ENCODE measurements at regions of chr10 and their contacts with region 1.

Region 1: GRCh38 chr10:93376372-93377293 is 105.5 kb downstream of the MYOF start:
- DNase-seq: peak; percentile 71 to 87 (median 82)
- H3K4me3 ChIP-seq: no peak overlapping the region
- H3K4me3 Mint-ChIP-seq: no peak overlapping the region
- H3K27ac ChIP-seq: peak overlapping the region in 1 of 2 donors; percentile 14
- H3K27ac Mint-ChIP-seq: peak overlapping the region in 5 of 7 donors; percentile 10 to 81 (median 71)
- H3K4me1 ChIP-seq: peaks cover 19 to 23% of the 10 kb centered on the region in 2 donors
- H3K4me1 Mint-ChIP-seq: peaks cover 21% of the 10 kb centered on the region
- H3K27me3 ChIP-seq: no peaks in the 10 kb centered on the region
- H3K27me3 Mint-ChIP-seq: no peaks in the 10 kb centered on the region
- CTCF ChIP-seq: peak; percentile 92

Region 2: DNA sequence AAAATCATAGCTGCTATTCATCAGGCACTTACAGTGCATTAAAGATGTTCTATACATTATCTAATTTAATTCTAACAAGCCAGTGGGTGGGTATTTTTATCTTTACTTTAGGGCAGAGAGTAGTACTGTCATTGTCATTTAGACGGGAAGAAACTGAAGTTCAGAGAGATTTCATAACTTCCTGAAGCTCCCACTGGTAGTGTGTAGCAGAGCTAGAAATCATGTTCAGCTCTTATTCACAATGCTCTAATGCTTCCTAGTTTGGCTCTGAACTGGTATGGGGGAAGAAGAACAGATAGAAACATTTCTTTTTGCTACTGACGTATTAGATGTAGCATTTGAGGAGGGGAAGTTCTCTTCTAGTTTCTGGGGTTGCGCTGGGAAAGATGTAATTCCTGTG is 186.3 kb before region 1 on chr10:
- intact Hi-C with region 1: no loop called
- DNase-seq: peak; percentile 40 to 60 (median 46)
- H3K4me3 ChIP-seq: peak overlapping the region in 1 of 3 experiments; percentile 33
- H3K4me3 Mint-ChIP-seq: peak overlapping the region in 1 of 2 donors; percentile 36
- H3K27ac ChIP-seq: peak overlapping the region; percentile 36 to 73
- H3K27ac Mint-ChIP-seq: peak overlapping the region; percentile 3 to 92 (median 58)
- H3K4me1 ChIP-seq: peaks cover 21% of the 10 kb centered on the region in 2 donors
- H3K4me1 Mint-ChIP-seq: peaks cover 16% of the 10 kb centered on the region
- H3K27me3 ChIP-seq: no peaks in the 10 kb centered on the region
- H3K27me3 Mint-ChIP-seq: peaks cover 0 to 2% (median under 1%) of the 10 kb centered on the region in 3 donors
- CTCF ChIP-seq: no peak

Region 3: DNA sequence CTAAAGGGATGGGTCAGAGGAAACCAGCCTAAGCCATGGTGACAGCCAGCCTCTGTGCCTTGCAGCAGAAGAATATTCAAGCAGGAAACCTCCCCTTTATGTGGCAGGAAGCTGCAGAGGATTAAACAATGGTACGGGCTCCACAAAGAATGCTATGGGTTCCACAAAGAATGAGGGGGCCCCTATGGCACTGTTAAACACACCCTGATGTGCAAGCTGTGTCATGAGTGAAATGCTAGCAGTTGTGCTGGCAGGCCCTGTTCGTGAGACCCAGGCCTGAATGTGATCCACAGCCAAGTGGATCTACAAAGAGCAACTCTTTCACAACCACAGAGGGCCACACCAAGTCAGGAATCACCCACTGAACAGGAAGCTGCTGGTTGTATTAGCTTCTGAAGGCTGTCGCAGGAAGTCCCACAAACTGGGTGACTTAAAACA is 36.6 kb after region 1 on chr10:
- intact Hi-C with region 1: loop called in 1 of 2 experiments (anchors 5 kb)
- DNase-seq: peak; percentile 74 to 91 (median 88)
- H3K4me3 ChIP-seq: peak overlapping the region in 1 of 3 experiments; percentile 47
- H3K4me3 Mint-ChIP-seq: peak overlapping the region in 1 of 2 donors; percentile 40
- H3K27ac ChIP-seq: peak overlapping the region; percentile 64 to 96
- H3K27ac Mint-ChIP-seq: peak overlapping the region; percentile 76 to 91 (median 88)
- H3K4me1 ChIP-seq: peaks cover 28 to 35% of the 10 kb centered on the region in 2 donors
- H3K4me1 Mint-ChIP-seq: peaks cover 37% of the 10 kb centered on the region
- H3K27me3 ChIP-seq: no peaks in the 10 kb centered on the region
- H3K27me3 Mint-ChIP-seq: peaks cover 2 to 4% (median 3%) of the 10 kb centered on the region in 3 donors
- CTCF ChIP-seq: no peak

Region 4: DNA sequence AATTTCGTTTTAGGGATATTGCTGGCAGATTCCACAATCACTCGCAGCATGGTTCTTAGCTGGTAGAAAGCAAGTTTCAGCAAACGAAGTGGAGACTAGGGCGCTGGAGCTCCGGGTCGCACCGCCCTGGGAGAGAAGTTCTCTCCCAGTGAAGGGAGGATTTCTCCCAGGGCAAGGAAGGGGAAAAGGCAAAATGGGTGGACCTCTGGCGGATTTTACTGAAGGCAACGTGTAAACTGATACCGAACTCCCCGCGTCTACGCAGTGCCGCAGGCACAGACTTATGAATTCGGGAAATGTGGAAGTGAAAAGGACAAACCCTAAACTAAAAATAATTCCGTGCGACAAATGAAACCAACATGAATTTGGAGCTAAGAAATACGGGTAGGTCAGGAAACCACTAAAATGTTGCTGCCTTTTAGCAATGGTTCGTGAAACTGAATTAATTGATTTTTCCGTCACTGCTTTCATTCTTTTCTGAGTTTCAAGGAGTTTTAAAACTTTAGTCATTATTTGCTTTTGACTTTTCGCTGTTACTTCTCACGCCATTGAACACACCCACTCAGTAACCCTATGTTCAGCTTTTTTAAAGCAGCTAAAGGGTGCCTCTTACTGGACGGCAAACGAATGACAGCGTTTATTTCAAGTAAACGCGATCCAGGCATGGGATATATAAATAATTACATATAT is 105.7 kb after region 1 on chr10 and contains the start of gene MYOF:
- intact Hi-C with region 1: loop called (anchors 2 kb)
- DNase-seq: peak; percentile 77 to 82 (median 81)
- H3K4me3 ChIP-seq: peak within 1 kb of the TSS; percentile 58 to 98 (median 84)
- H3K4me3 Mint-ChIP-seq: peak within 1 kb of the TSS; percentile 92 to 99
- H3K27ac ChIP-seq: peak within 1 kb of the TSS; percentile 77 to 99
- H3K27ac Mint-ChIP-seq: peak within 1 kb of the TSS; percentile 92 to 99 (median 96)
- H3K4me1 ChIP-seq: peaks cover 20 to 37% of the 10 kb centered on the region in 2 donors
- H3K4me1 Mint-ChIP-seq: peaks cover 41% of the 10 kb centered on the region
- H3K27me3 ChIP-seq: no peaks in the 10 kb centered on the region
- H3K27me3 Mint-ChIP-seq: peaks cover 0 to 2% (median 2%) of the 10 kb centered on the region in 3 donors
- CTCF ChIP-seq: peak; percentile 80
- polyA plus RNA-seq, gene MYOF: 9.7 to 29.1 (median 14.5) TPM

Region 5: DNA sequence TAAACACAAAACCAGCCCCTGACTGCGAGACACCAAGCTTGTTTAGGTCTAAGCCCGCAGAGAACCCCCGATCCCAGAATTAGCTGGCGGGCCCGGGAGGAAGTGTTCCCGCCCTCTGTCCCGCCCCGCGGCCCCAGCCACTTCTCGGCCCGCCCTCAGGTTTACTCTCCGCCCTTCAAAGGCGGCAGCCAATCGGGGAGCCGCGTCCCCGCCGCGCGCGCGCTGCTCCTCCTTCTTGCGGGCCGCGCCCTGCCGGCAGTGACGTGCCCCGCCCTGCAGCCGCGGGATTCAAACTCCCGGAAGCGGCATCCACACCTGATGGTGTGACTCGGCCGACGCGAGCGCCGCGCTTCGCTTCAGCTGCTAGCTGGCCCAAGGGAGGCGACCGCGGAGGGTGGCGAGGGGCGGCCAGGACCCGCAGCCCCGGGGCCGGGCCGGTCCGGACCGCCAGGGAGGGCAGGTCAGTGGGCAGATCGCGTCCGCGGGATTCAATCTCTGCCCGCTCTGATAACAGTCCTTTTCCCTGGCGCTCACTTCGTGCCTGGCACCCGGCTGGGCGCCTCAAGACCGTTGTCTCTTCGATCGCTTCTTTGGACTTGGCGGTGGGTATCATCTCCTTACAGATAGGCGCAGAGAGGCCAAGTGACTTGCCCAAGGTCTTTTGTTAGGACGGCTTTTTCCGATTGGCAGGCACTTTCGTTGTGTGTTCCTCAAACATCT is 119.8 kb after region 1 on chr10 and contains the start of gene CEP55:
- intact Hi-C with region 1: loop called in 1 of 2 experiments (anchors 5 kb)
- DNase-seq: peak; percentile 90 to 92 (median 92)
- H3K4me3 ChIP-seq: peak within 1 kb of the TSS; percentile 91 to 95 (median 94)
- H3K4me3 Mint-ChIP-seq: peak within 1 kb of the TSS; percentile 96 to 98
- H3K27ac ChIP-seq: peak within 1 kb of the TSS in 1 of 2 donors; percentile 71
- H3K27ac Mint-ChIP-seq: peak within 1 kb of the TSS; percentile 63 to 94 (median 85)
- H3K4me1 ChIP-seq: peaks cover 22 to 28% of the 10 kb centered on the region in 2 donors
- H3K4me1 Mint-ChIP-seq: peaks cover 32% of the 10 kb centered on the region
- H3K27me3 ChIP-seq: no peaks in the 10 kb centered on the region
- H3K27me3 Mint-ChIP-seq: peaks cover 0 to 5% (median 1%) of the 10 kb centered on the region in 3 donors
- CTCF ChIP-seq: no peak
- polyA plus RNA-seq, gene CEP55: 0.05 to 0.26 TPM in 2 of 3 donors, not detected in the other

Region 6: DNA sequence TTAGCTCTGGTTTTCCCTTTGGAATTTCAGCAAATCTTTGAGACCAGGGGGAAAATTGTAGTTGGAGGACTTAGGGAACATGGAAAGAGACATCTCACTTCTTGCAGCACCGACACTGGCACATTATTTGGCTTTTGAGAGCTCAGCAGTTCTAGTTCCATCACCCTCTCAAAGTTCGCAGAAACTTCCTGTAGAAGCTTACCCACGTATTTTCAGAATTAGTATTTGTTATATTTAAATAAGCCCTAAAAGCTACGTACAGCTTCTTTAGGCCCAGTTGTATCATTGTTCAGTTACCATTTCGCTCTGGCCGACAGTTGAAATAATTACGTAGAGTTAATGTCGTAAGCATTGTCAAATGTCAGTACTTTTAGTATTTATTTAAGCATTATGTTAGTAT is 133.2 kb after region 1 on chr10:
- intact Hi-C with region 1: loop called in 1 of 2 experiments (anchors 2 kb)
- DNase-seq: no peak
- H3K4me3 ChIP-seq: no peak overlapping the region
- H3K4me3 Mint-ChIP-seq: no peak overlapping the region
- H3K27ac ChIP-seq: no peak overlapping the region
- H3K27ac Mint-ChIP-seq: peak overlapping the region in 1 of 7 donors; percentile 77
- H3K4me1 ChIP-seq: peaks cover 13 to 19% of the 10 kb centered on the region in 2 donors
- H3K4me1 Mint-ChIP-seq: peaks cover 10% of the 10 kb centered on the region
- H3K27me3 ChIP-seq: no peaks in the 10 kb centered on the region
- H3K27me3 Mint-ChIP-seq: peaks cover 0 to 2% (median 0%) of the 10 kb centered on the region in 3 donors
- CTCF ChIP-seq: no peak

Region 7: GRCh38 chr10:93672022-93672678 is 295.5 kb after region 1 on chr10:
- intact Hi-C with region 1: loop called in 1 of 2 experiments (anchors 10 kb)
- DNase-seq: no peak
- H3K4me3 ChIP-seq: no peak overlapping the region
- H3K4me3 Mint-ChIP-seq: no peak overlapping the region
- H3K27ac ChIP-seq: no peak overlapping the region
- H3K27ac Mint-ChIP-seq: no peak overlapping the region
- H3K4me1 ChIP-seq: no peaks in the 10 kb centered on the region
- H3K4me1 Mint-ChIP-seq: no peaks in the 10 kb centered on the region
- H3K27me3 ChIP-seq: no peaks in the 10 kb centered on the region
- H3K27me3 Mint-ChIP-seq: peaks cover 0 to 1% (median 0%) of the 10 kb centered on the region in 3 donors
- CTCF ChIP-seq: no peak